Endothelial cell of umbilical vein (primary cell): ENCODE measurements at regions of chr5 and their contacts with region 1.

Region 1: GRCh38 chr5:131548176-131548575 is 86.9 kb downstream of the RAPGEF6 start:
- DNase-seq: peak; percentile 88
- H3K4me3 ChIP-seq: no peak overlapping the region
- H3K27ac ChIP-seq: no peak overlapping the region
- H3K4me1 ChIP-seq: peaks cover 19% of the 10 kb centered on the region
- H3K27me3 ChIP-seq: no peaks in the 10 kb centered on the region
- CTCF ChIP-seq: no peak
- POLR2A ChIP-seq: no peak

Region 2: DNA sequence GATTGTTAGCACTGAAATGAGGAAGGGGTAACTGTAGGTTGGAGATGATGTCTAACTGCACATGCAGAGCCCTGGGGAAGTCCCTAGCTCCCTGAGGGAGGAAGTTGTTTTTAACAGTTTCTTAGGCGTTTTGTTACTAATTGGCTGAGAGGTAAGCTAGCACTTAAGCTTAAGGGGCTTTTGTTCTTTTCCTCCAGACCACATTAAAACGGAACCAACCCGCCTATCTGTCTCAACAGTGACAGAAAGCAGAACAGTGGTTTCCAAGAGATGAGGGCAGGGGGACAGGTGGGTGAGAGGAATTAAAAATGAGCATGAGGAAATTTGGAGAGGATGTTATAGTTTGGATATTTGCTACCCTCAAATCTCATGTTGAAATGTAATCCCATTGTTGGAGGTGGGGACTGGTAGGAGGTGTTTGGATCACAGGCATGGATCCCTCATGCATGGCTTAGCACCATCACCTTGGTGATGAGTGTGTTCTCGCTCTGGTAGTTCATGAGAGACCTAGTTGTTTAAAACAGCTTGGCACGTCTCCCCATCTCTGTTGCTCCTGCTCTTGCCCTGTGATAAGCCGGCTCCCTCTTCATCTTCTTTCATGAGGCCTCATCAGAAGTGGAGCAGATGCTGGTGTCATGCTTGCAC is 338.5 kb before region 1 on chr5:
- CTCF ChIA-PET with region 1: no interaction called
- POLR2A ChIA-PET with region 1: no interaction called
- dilution Hi-C with region 1: no loop called
- intact Hi-C with region 1: no loop called
- DNase-seq: no peak
- H3K4me3 ChIP-seq: no peak overlapping the region
- H3K27ac ChIP-seq: no peak overlapping the region
- H3K4me1 ChIP-seq: no peaks in the 10 kb centered on the region
- H3K27me3 ChIP-seq: no peaks in the 10 kb centered on the region
- CTCF ChIP-seq: no peak
- POLR2A ChIP-seq: no peak

Region 3: GRCh38 chr5:131263648-131264450 is 284.3 kb before region 1 on chr5 and contains the start of gene CDC42SE2:
- CTCF ChIA-PET with region 1: no interaction called
- POLR2A ChIA-PET with region 1: no interaction called
- dilution Hi-C with region 1: no loop called
- intact Hi-C with region 1: no loop called
- DNase-seq: peak; percentile 87
- H3K4me3 ChIP-seq: peak within 1 kb of the TSS; percentile 71 to 97 (median 96)
- H3K27ac ChIP-seq: peak within 1 kb of the TSS; percentile 82
- H3K4me1 ChIP-seq: peaks cover 26% of the 10 kb centered on the region
- H3K27me3 ChIP-seq: no peaks in the 10 kb centered on the region
- CTCF ChIP-seq: no peak
- POLR2A ChIP-seq: peak; percentile 93
- total RNA-seq, gene CDC42SE2: 21.2 and 21.9 TPM in 2 replicates

Region 4: DNA sequence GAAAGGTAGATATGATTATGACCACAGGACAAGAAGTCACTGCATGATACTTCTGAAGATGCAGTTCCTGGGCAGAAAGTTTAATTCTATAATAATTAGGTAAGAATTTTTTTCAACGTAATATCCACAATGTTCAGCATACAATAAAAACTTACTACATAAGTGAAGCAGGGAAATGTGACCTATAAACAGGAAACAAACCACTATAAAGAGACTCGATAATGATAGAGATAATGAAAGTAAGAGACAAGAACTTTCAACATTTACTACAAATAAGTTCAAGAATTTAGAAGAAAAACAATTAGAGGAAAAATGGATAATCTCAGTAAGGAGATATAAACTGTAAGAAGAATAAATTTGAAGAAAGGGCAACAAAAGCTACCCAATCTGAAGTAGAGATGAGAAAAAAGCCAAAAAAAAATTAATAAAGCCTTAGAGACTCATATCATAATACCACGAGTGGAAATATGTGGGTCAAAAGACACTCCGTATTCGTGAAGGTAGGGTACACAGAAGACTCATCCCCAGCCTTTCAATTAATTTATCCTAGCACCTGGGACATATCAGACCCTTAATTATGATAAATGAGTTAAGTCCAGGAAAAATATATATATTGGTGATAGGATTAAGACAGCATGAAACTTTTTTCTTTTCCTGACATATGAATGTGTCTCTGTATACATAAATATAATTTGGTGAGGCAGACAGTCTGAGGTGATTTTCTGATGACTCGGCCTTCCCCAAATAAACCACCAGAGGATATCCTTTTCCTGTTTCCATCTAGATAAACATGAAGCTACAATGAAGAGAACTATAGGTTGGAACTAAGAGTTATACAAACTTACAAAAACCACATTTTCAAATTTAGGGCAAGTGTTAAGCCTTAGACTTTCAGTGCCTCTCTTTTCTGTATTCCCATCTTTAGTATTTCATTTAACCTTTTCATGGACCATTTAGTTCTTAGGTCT is 33.6 kb before region 1 on chr5:
- CTCF ChIA-PET with region 1: no interaction called
- POLR2A ChIA-PET with region 1: no interaction called
- dilution Hi-C with region 1: no loop called
- intact Hi-C with region 1: loop called (anchors 1 kb)
- DNase-seq: peak; percentile 85
- H3K4me3 ChIP-seq: peak overlapping the region; percentile 7 to 77 (median 49)
- H3K27ac ChIP-seq: peak overlapping the region; percentile 86
- H3K4me1 ChIP-seq: peaks cover 18% of the 10 kb centered on the region
- H3K27me3 ChIP-seq: no peaks in the 10 kb centered on the region
- CTCF ChIP-seq: no peak
- POLR2A ChIP-seq: no peak

Region 5: GRCh38 chr5:131563434-131564228 is 15.5 kb after region 1 on chr5:
- CTCF ChIA-PET with region 1: interaction called, 6 read pairs
- POLR2A ChIA-PET with region 1: no interaction called
- dilution Hi-C with region 1: no loop called
- intact Hi-C with region 1: loop called (anchors 2 kb)
- DNase-seq: no peak
- H3K4me3 ChIP-seq: no peak overlapping the region
- H3K27ac ChIP-seq: no peak overlapping the region
- H3K4me1 ChIP-seq: no peaks in the 10 kb centered on the region
- H3K27me3 ChIP-seq: no peaks in the 10 kb centered on the region
- CTCF ChIP-seq: no peak
- POLR2A ChIP-seq: no peak